ENCODE measurements at regions of chr1 and their contacts with region 1.

Region 1: DNA sequence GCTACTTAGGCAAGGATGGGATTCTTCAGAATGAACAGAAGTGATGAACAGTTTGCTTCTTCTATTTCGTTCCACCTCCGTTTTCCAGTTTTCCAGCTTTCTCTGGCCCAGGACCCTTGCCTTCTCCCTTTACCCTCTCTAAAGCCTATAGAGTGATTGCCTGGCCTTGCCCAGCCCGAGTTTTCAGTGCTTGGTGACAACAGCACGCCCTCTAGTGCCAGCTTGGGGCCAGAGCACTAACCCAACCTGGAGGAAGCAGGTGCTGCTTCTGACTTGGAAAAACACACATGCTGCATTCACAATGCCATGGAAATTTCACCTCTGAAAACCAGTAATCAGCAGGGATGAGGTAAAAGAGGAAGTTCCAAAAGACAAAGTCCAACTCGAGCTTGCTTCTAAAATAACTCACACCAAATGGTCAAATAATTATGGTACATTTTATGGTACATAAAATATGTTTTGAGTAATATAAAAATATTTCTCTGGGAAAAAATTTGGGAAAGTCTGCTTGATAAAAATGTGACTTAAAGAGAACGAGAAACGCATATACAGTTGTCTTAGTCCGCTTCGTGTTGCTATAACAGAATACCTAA is 26.1 kb downstream of the UBE2T start:
- DNase-seq: peak; percentile 80 to 89
- ATAC-seq: peak; percentile 85 to 96; a peak in 5 of 6 replicates
- H3K4me3 ChIP-seq: no peak overlapping the region
- H3K27ac ChIP-seq: peak overlapping the region in 1 of 2 experiments; percentile 26; a peak in 2 of 6 replicates
- H3K4me1 ChIP-seq: peaks cover 5% of the 10 kb centered on the region; the same call in 1 of the 3 replicates
- CTCF ChIP-seq: peak; percentile 98
- EP300 ChIP-seq: no peak
- POLR2A ChIP-seq: no peak
- RAD21 ChIP-seq: peak; percentile 98 to 99

Region 2: DNA sequence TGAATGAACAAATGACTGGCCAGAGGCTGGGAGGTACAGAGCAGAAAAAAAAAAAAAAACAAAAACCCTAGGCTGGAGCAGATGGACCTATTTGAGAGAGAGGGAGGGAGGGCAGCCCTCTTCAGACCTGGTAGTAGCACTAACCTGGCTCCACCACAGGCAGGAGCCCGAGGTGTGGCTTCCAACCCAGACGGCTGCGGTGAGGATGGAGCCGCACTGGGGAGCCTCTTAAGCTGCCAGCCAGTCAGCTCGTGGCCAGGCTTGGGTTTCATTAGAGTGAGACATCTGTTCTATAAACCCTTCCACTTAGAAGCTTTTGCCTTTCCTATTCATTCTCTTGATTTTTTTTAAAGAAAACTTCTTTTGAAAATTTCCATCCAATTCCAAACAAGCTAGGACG is 105.3 kb before region 1 on chr1:
- CTCF ChIA-PET with region 1: interaction called, 17 read pairs
- POLR2A ChIA-PET with region 1: no interaction called
- DNase-seq: peak in 1 of 2 experiments; percentile 52
- ATAC-seq: peak; percentile 73 to 75
- H3K4me3 ChIP-seq: no peak overlapping the region
- H3K27ac ChIP-seq: no peak overlapping the region
- H3K4me1 ChIP-seq: peaks cover 11% of the 10 kb centered on the region
- CTCF ChIP-seq: 0 out of 3 replicates have a peak, but pooled peaks have one; percentile 7
- EP300 ChIP-seq: no peak
- POLR2A ChIP-seq: no peak
- RAD21 ChIP-seq: peak in 1 of 2 experiments; percentile 29; a peak in 3 of 5 replicates

Region 3: GRCh38 chr1:202235856-202236837 is 79.5 kb before region 1 on chr1:
- CTCF ChIA-PET with region 1: interaction called, 70 read pairs
- POLR2A ChIA-PET with region 1: interaction called, 4 read pairs
- DNase-seq: peak; percentile 92 to 98
- ATAC-seq: peak; percentile 89 to 92
- H3K4me3 ChIP-seq: peak overlapping the region; percentile 26
- H3K27ac ChIP-seq: peak overlapping the region; percentile 77 to 88
- H3K4me1 ChIP-seq: peaks cover 29% of the 10 kb centered on the region
- CTCF ChIP-seq: peak; percentile 68
- EP300 ChIP-seq: no peak
- POLR2A ChIP-seq: no peak
- RAD21 ChIP-seq: peak; percentile 21 to 47; a peak in 3 of 5 replicates

Region 4: DNA sequence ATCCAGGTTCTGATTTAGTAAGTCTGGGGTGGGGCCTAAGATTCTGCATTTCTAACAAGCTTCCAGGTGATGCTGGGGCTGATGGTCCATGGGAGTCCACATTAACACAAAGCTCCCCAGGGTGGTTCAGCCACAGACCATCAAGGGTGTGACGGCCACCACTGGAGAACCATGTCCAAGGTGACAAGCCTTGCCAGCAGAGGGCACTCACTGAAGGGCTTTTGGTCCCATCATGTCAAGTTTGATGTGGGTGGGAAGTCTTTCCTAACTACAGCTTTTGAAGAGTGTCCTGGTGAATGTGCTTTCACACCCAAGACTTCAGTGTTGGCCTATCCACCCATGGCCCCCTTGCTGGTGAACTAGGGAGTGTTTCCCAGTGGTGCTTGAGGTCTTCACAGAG is 41.1 kb before region 1 on chr1:
- CTCF ChIA-PET with region 1: interaction called, 48 read pairs
- POLR2A ChIA-PET with region 1: no interaction called
- DNase-seq: peak; percentile 50 to 54
- ATAC-seq: peak in 1 of 2 experiments; percentile 87; a peak in 3 of 6 replicates
- H3K4me3 ChIP-seq: no peak overlapping the region
- H3K27ac ChIP-seq: no peak overlapping the region
- H3K4me1 ChIP-seq: no peaks in the 10 kb centered on the region
- CTCF ChIP-seq: peak; percentile 57
- EP300 ChIP-seq: no peak
- POLR2A ChIP-seq: no peak
- RAD21 ChIP-seq: peak; percentile 58 to 78

Region 5: GRCh38 chr1:202291961-202292712 is 23.5 kb before region 1 on chr1:
- CTCF ChIA-PET with region 1: interaction called, 15 read pairs
- POLR2A ChIA-PET with region 1: no interaction called
- DNase-seq: peak; percentile 57 to 68
- ATAC-seq: peak; percentile 69 to 83
- H3K4me3 ChIP-seq: no peak overlapping the region
- H3K27ac ChIP-seq: peak overlapping the region; percentile 45 to 59; a peak in 5 of 6 replicates
- H3K4me1 ChIP-seq: peaks cover 22% of the 10 kb centered on the region
- CTCF ChIP-seq: no peak
- EP300 ChIP-seq: no peak
- POLR2A ChIP-seq: no peak
- RAD21 ChIP-seq: no peak

Region 6: DNA sequence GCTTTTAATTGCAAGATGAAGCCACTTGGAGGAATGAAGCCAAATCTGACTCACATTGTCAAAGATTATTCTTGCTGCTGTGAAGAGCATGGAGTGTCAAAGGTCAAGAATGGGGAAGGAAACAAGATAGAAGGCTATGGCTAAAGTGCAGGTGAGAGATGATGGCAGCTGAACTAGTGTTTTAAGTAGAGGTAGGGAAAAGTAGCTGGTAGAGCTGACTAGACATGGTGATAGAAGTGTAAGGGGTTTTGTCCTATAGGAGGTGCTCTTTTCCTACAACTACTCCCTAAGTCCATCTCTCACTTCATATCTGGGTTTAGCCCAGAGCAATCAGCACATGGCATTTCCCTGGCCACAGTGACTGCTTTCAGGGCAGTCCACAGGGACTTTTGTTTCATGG is 14.2 kb after region 1 on chr1:
- CTCF ChIA-PET with region 1: interaction called, 51 read pairs
- POLR2A ChIA-PET with region 1: no interaction called
- DNase-seq: peak in 1 of 2 experiments; percentile 33
- ATAC-seq: peak; percentile 39 to 63; a peak in 4 of 6 replicates
- H3K4me3 ChIP-seq: no peak overlapping the region
- H3K27ac ChIP-seq: no peak overlapping the region
- H3K4me1 ChIP-seq: no peaks in the 10 kb centered on the region
- CTCF ChIP-seq: peak; percentile 24; the same call in 1 of the 3 replicates
- EP300 ChIP-seq: no peak
- POLR2A ChIP-seq: no peak
- RAD21 ChIP-seq: no peak; a peak in 1 of 5 replicates

Region 7: GRCh38 chr1:202376247-202376646 is 60.6 kb after region 1 on chr1:
- CTCF ChIA-PET with region 1: no interaction called
- POLR2A ChIA-PET with region 1: no interaction called
- DNase-seq: peak in 1 of 2 experiments; percentile 22
- ATAC-seq: no peak
- H3K4me3 ChIP-seq: no peak overlapping the region
- H3K27ac ChIP-seq: peak overlapping the region; percentile 62 to 75; a peak in 5 of 6 replicates
- H3K4me1 ChIP-seq: peaks cover 58% of the 10 kb centered on the region
- CTCF ChIP-seq: no peak
- EP300 ChIP-seq: no peak
- POLR2A ChIP-seq: no peak
- RAD21 ChIP-seq: no peak

Measured in A549 (cell line).